ENCODE measurements at regions of chr3 and their contacts with region 1.

Region 1: DNA sequence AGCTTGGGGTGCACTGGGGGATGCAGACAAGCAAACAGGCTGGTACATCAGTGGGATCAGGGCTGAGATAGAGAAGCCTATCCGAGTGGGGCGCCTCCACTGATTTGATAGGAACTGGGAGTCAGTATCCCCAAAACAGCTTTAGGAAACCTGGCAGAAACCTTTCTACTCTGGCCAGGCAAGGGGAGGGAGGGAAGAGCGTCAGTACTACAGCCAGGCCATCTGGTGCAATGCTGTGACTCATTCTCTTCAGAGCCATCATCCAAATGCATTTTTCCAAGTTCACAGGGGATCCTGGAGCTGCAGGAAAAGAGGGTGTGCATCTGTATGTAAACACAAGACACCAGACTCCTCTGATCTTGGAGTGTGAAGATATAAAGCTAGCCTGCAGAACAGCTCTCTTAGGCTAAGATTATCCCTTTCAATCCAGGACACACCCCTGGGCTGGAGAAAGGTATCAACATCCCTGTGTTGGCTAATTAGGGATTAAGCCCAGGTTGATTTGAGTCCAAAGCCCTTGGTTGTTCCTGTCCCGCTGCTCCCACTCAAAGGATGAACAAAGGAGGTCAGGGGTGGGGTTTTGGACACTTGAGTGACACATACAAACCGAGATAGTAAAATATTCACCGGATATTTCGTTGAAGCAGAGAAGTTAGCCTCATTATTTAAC is 9.3 kb downstream of the GALNT15 start:
- DNase-seq: no peak
- ATAC-seq: no peak

Region 2: DNA sequence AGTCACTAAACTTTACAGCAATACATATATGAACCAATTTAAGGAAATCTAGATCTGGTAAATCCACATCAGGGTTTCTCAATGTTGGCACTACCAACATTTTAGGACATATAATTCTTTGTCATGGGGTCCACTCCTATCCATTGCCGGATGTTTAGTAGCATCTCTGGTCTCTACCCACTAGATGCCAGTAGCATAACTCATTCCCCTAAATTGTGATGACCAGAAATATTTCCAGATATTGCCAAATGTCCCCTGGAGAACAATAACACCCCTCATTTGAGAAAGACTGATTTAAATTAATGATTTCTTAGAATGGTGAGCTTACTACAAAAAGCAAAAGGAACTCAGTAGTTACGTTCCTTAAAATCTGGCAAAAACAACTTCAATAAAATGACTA is 362.8 kb before region 1 on chr3:
- intact Hi-C with region 1: loop called in 1 of 2 experiments (anchors 10 kb)
- DNase-seq: no peak
- ATAC-seq: no peak

Region 3: DNA sequence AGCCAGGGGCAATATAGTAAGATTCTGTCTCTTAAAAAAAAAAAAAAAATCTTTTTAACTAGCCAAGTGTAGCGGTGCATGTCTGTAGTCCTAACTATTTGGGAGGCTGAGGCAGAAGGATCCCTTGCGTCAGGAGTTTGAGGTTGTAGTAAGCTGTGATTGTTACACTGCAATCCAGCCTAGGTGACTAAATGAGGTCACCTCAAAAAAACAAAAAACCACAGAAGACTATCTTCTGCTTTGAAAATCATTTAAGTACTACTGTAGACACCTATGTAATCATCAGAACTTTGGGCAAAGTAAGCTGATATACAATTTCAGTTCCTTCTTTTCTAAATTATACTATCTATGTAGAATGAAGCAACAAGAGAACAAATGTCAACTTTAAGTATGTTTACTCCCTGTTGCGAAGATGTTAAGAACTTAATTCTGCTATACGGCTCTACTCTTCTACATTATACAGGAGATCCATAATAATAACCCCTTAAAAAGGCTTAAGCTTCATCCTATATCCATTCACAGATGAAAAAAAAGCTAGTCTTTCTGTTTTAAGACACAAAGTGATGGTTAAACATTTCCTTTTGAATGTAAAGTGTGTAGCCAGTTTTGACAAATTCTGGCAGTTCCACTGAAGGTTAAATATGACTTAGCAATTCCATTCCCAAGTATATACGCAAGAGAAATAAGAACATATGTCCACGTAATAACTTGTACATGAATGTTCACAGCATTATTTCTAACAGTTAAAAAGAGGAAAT is 406.3 kb after region 1 on chr3:
- intact Hi-C with region 1: no loop called
- DNase-seq: no peak
- ATAC-seq: no peak

Region 4: DNA sequence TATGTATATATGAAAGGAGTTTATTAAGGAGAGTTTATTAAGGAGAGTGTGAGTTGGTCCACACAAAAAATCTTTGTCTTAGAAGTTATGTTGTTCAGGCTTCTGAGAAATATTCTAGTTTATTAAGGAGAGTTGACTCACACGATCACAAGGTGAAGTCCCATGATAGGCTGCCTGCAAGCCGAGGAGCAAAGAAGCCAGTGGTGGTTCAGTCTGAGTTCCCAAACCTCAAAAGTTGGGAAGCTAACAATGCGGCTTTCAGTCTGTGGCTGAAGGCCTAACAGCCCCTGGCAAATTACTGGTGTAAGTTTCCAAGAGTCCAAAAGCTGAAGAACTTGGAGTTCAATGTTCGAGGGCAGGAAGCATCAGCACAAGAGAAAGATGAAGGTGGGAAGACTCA is 463.9 kb after region 1 on chr3:
- intact Hi-C with region 1: no loop called
- DNase-seq: no peak
- ATAC-seq: no peak

Measured in left colon (tissue), 2 donors.